ENCODE measurements at regions of chr7 and their contacts with region 1.

Region 1: DNA sequence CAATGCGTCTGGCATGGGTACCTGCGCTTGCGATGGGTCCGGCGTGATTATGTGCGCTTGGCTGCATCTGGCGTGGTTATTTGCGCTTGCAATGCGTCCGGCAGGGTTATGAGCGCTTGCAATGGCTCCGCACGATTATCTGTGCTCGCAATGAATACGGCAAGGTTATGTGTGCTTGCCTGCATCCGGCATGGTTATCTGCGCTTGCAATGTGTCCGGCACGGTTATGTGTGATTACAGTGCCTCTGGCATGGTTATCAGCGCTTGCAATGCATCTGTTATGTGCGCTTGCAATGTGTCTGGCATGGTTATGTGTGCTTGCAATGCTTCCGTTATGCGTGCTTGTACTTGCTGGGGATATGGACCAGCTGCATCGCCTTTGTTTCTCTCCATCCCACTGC is 37.7 kb downstream of the RBAK start:
- DNase-seq: no peak
- ATAC-seq: no peak
- H3K4me3 Mint-ChIP-seq: no peak overlapping the region
- H3K27ac Mint-ChIP-seq: no peak overlapping the region
- H3K4me1 Mint-ChIP-seq: peaks cover 2% of the 10 kb centered on the region
- H3K27me3 Mint-ChIP-seq: no peaks in the 10 kb centered on the region

Region 2: GRCh38 chr7:4610768-4611467 is 472.4 kb before region 1 on chr7:
- CTCF ChIA-PET with region 1: no interaction called
- POLR2A ChIA-PET with region 1: no interaction called
- intact Hi-C with region 1: loop called in 1 of 2 experiments (anchors 10 kb)
- DNase-seq: peak; percentile 59
- ATAC-seq: peak; percentile 77
- H3K4me3 Mint-ChIP-seq: no peak overlapping the region
- H3K27ac Mint-ChIP-seq: no peak overlapping the region
- H3K4me1 Mint-ChIP-seq: peaks cover 14% of the 10 kb centered on the region
- H3K27me3 Mint-ChIP-seq: no peaks in the 10 kb centered on the region

Region 3: DNA sequence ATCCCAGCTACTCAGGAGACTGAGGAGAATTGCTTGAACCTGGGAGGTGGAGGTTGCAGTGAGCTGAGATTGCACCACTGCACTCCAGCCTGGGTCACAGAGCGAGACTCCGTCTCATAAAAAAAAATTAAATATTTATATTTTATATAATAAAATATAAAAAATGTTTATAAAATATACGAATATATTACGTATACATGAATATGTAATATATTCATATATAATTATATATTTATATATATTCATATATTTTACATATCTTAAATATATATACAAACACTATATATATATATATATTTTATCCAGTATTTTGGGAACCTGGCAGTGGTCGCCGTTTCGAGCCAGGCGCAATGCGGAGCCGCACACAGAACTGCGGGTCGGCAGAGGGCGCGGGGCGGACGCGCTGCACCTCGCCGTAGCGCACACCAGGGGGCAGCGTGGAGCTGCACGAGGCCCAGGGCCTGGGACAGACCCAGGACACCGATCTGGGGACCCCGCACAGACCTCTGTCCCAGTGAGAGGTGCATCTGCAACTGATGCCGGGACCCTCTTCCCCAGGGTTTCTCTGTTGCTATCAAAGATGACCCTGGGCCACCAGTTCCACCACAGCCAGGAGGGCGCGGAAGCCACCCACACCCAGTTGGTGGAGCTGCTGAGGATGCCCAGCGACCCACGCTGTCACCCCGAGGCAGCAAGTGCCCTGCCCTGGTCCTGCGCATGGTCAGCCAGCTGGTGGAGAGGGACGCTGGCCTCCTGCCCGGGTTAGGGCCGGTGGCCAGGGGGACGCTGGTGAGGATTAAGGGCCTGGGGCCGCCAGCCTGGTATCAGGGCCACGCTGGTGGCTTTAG is 285.2 kb before region 1 on chr7:
- CTCF ChIA-PET with region 1: interaction called, 36 read pairs
- POLR2A ChIA-PET with region 1: no interaction called
- intact Hi-C with region 1: loop called (anchors 1 kb)
- DNase-seq: peak; percentile 79
- ATAC-seq: peak; percentile 92
- H3K4me3 Mint-ChIP-seq: no peak overlapping the region
- H3K27ac Mint-ChIP-seq: no peak overlapping the region
- H3K4me1 Mint-ChIP-seq: peaks cover 4% of the 10 kb centered on the region
- H3K27me3 Mint-ChIP-seq: no peaks in the 10 kb centered on the region

Region 4: DNA sequence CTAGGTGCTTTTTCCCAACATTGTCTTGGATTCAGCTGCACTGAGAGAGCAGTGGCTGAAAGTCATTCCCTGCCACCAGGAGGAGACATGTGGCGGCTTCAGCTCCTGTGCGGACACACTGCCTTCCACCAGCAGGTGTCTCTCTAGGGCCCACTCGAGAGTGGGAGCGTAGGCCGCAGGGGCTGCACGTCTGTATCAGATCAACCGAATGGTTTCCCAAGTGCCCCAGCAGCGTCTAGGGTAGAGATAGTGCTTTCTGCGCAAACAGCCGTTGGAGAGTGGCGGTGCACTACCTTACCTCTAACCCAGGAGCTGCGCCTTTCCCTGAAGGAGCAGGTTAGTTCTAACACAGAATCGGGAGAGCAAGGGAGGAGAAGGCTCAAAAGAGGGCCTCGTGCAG is 253.1 kb before region 1 on chr7:
- CTCF ChIA-PET with region 1: interaction called, 9 read pairs
- POLR2A ChIA-PET with region 1: no interaction called
- intact Hi-C with region 1: loop called in 1 of 2 experiments (anchors 1 kb)
- DNase-seq: peak; percentile 81
- ATAC-seq: peak; percentile 93
- H3K4me3 Mint-ChIP-seq: no peak overlapping the region
- H3K27ac Mint-ChIP-seq: no peak overlapping the region
- H3K4me1 Mint-ChIP-seq: peaks cover 2% of the 10 kb centered on the region
- H3K27me3 Mint-ChIP-seq: no peaks in the 10 kb centered on the region

Region 5: DNA sequence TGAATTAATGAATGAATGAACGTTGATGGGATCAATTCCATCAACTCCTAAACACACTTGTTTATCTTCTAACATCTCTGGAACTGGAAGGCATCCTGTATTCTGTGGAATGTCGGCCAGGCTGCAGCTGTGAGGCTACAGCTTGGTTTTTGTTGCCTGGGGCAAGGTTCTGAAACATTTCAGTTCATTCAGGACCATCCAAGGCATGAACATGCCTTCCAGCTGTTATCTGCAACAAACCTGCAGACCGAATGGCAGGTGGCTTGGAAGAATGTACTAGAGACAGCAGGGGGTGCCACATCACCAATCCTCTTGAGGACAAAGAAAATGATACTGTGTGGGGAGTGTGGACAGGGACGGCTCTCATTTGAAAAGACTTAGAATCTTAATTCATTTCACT is 233.9 kb before region 1 on chr7:
- CTCF ChIA-PET with region 1: no interaction called
- POLR2A ChIA-PET with region 1: interaction called, 3 read pairs
- intact Hi-C with region 1: loop called in 1 of 2 experiments (anchors 1 kb)
- DNase-seq: peak; percentile 46
- ATAC-seq: peak; percentile 64
- H3K4me3 Mint-ChIP-seq: no peak overlapping the region
- H3K27ac Mint-ChIP-seq: no peak overlapping the region
- H3K4me1 Mint-ChIP-seq: peaks cover 9% of the 10 kb centered on the region
- H3K27me3 Mint-ChIP-seq: peaks cover 16% of the 10 kb centered on the region

Region 6: GRCh38 chr7:4973728-4974198 is 109.5 kb before region 1 on chr7:
- CTCF ChIA-PET with region 1: interaction called, 19 read pairs
- POLR2A ChIA-PET with region 1: no interaction called
- intact Hi-C with region 1: loop called (anchors 1 kb)
- DNase-seq: peak; percentile 96
- ATAC-seq: peak; percentile 98
- H3K4me3 Mint-ChIP-seq: peak overlapping the region; percentile 97
- H3K27ac Mint-ChIP-seq: peak overlapping the region; percentile 92
- H3K4me1 Mint-ChIP-seq: peaks cover 31% of the 10 kb centered on the region
- H3K27me3 Mint-ChIP-seq: no peaks in the 10 kb centered on the region

Measured in activated CD4-positive, alpha-beta T cell treated with anti-CD3 and anti-CD28 coated beads for 36 hours (primary cell).